ENCODE measurements at regions of chr2 and their contacts with region 1.

Region 1: DNA sequence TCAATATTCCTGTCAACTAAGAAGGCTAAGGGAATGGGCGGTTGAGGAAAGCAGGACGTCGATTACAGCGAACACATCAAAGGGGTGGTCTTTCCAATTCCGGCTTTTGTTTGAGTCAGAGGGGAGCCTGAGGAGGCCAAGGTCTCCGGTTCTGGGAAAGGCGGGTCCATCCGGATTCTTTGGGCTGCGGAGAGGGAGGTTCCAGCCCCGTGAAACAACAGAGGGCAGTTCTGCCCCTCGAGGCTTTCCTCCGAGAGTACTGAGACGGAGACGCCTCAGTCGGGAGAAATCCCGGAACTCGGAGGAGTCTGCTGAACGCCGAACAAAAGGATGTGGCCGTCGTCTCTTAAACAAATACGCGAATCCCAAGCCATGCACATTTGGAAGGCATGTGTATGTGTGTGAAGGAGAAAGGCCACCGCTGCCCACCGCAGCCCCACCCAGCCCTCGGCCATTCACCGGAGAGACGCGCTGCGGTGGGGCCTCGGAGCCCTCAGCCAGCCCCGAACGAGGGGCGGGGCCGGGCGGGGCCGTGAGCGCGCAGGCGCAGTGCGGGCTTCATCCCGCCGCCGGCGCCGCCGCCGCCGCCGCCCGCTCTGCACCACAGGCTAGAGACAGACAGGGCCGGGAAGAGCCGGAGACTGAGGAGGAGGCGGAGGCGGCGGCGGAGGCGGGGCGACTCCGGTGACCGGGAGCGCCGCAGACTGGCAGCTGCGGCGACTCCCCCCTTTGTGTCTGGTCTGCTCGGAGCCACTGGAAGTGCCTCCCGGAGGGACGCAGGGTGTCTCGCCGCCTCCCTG is at the start of gene BMPR2:
- DNase-seq: peak; percentile 90 to 91
- ATAC-seq: peak; percentile 85 to 94 (median 90)
- H3K4me3 ChIP-seq: peak within 1 kb of the TSS; percentile 74 to 98 (median 93)
- H3K27ac ChIP-seq: peak within 1 kb of the TSS; percentile 92 to 100 (median 98)
- H3K4me1 ChIP-seq: peaks cover 2 to 39% (median 23%) of the 10 kb centered on the region in 9 donors
- H3K27me3 ChIP-seq: peaks cover 0 to 5% (median 0%) of the 10 kb centered on the region in 7 donors
- CTCF ChIP-seq: no peak
- total RNA-seq, gene BMPR2: 48.5 to 89.4 (median 75.3) TPM

Region 2: DNA sequence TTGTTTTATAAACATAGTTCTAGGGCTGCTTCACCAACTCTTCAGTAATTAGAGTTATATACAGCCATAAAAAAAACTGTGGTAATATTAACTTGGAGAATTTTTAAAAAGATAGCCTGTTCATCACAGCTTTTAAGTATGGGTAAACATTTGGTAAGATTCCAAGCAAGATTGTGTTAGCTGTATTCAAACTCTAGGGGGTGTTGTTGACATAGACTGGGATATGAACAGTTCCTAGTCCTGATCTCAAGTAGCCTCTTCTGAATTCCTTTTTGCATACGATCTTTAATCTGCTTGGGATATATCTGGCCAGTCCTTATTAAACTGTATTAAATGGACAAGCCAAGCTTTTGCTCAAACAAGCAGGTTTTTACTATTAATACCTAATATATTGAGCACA is 96.9 kb before region 1 on chr2:
- intact Hi-C with region 1: loop called in 4 of 10 experiments (anchors 2 to 10 kb)
- DNase-seq: no peak
- ATAC-seq: peak in 7 of 8 donors; percentile 57 to 84 (median 74)
- H3K4me3 ChIP-seq: no peak overlapping the region
- H3K27ac ChIP-seq: peak overlapping the region in 2 of 10 donors; percentile 1 to 59
- H3K4me1 ChIP-seq: peaks cover 0 to 32% (median 21%) of the 10 kb centered on the region in 9 donors
- H3K27me3 ChIP-seq: no peaks in the 10 kb centered on the region
- CTCF ChIP-seq: peak; percentile 28 to 80 (median 65)

Region 3: DNA sequence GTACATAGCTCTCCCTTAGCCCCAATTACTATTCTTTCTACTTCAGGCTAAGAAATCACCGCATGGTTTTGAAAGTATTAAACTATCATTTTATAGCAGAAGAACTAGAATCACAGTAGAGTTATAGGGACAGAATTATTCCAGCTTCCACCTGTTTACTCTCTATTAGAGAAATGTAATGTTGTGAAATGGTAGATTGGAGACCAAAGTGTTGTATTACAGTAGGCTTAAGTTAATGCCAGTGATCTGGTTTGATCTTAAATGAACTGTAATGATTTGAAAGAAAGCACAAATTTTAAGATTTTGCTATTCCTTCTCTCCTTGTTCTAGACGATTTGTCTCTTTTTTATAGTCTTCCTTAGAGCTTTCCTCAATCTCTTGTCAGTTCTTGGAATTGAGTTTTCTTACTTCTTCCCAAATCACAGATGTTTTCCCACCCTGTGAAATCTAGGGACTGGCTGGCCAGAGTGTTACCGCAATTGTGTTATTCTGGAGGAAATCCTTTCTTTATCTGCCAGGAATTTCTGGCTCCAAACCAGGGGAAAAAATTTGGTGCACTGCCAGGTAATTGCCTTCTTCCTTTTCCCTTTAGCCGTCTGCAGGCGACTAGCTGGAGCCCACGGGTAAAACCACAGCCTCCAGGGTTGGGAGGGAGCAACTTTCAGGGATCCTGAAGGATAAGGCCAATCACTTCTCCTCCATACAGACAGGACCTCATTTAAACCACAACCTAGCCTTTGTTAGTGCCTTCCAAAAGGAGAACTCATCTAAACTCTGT is 58.5 kb before region 1 on chr2:
- intact Hi-C with region 1: loop called in 7 of 10 experiments (anchors 1 to 10 kb)
- DNase-seq: peak; percentile 31 to 87
- ATAC-seq: peak; percentile 83 to 94 (median 90)
- H3K4me3 ChIP-seq: no peak overlapping the region
- H3K27ac ChIP-seq: peak overlapping the region in 8 of 10 donors; percentile 25 to 89 (median 40)
- H3K4me1 ChIP-seq: peaks cover 0 to 36% (median 19%) of the 10 kb centered on the region in 9 donors
- H3K27me3 ChIP-seq: no peaks in the 10 kb centered on the region
- CTCF ChIP-seq: no peak

Region 4: GRCh38 chr2:202339071-202339870 is 36.5 kb before region 1 on chr2:
- intact Hi-C with region 1: loop called in 1 of 10 experiments (anchors 5 kb)
- DNase-seq: no peak
- ATAC-seq: no peak
- H3K4me3 ChIP-seq: no peak overlapping the region
- H3K27ac ChIP-seq: no peak overlapping the region
- H3K4me1 ChIP-seq: peaks cover 0 to 20% (median 4%) of the 10 kb centered on the region in 9 donors
- H3K27me3 ChIP-seq: no peaks in the 10 kb centered on the region
- CTCF ChIP-seq: no peak

Region 5: GRCh38 chr2:202494300-202495229 is 118.8 kb after region 1 on chr2:
- intact Hi-C with region 1: loop called in 4 of 10 experiments (anchors 5 to 10 kb)
- DNase-seq: peak in 1 of 2 donors; percentile 31
- ATAC-seq: peak; percentile 52 to 83 (median 68)
- H3K4me3 ChIP-seq: no peak overlapping the region
- H3K27ac ChIP-seq: peak overlapping the region in 1 of 10 donors; percentile 11
- H3K4me1 ChIP-seq: peaks cover 0 to 56% (median 27%) of the 10 kb centered on the region in 9 donors
- H3K27me3 ChIP-seq: no peaks in the 10 kb centered on the region
- CTCF ChIP-seq: no peak

Region 6: DNA sequence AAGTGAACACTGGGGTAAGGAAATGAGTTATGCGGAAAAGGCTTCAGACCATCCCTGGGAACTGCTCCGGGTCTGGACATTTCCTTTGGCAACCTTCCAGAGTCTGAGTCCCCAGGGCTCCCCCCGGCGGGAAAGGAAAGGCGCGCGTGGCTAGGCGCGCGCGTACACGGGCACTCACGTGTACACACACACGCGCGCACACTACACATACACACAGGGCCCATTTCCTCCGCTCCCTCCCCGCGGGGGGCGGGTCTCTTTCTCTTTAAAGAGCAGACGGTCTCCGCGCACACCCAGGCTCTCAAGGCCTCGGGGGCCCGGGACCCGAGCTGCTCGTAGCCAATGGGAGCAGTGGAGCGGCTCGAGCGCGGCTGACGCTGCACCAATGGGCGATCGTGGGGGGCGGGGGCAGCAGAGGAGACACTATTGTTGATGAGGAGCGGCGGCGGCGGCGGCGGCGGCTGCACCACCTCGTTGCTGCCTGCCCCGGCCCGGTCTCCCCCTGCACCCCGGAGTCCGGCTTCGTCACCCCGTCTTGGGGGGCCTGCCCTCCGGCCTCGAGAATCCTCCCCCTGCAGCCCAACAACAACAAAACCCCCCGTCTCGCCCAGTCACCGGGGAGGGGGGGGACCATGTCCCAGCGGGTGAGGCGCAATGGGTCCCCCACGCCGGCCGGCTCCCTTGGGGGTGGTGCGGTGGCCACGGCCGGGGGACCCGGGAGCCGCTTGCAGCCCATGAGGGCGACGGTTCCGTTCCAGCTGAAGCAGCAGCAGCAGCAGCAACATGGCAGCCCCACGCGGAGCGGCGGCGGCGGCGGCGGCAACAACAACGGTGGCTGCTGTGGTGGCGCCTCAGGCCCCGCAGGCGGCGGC is 259.0 kb after region 1 on chr2 and contains the start of gene FAM117B:
- intact Hi-C with region 1: loop called in 1 of 10 experiments (anchors 10 kb)
- DNase-seq: peak; percentile 98
- ATAC-seq: peak; percentile 97 to 99 (median 98)
- H3K4me3 ChIP-seq: peak within 1 kb of the TSS; percentile 85 to 99 (median 96)
- H3K27ac ChIP-seq: peak within 1 kb of the TSS; percentile 81 to 95 (median 90)
- H3K4me1 ChIP-seq: peaks cover 3 to 30% (median 24%) of the 10 kb centered on the region in 9 donors
- H3K27me3 ChIP-seq: no peaks in the 10 kb centered on the region
- CTCF ChIP-seq: peak in 1 of 9 donors; percentile 5
- total RNA-seq, gene FAM117B: 0.75 to 3.9 (median 2.6) TPM

Region 7: GRCh38 chr2:203056288-203056687 is 680.5 kb after region 1 on chr2:
- intact Hi-C with region 1: no loop called
- DNase-seq: no peak
- ATAC-seq: no peak
- H3K4me3 ChIP-seq: no peak overlapping the region
- H3K27ac ChIP-seq: no peak overlapping the region
- H3K4me1 ChIP-seq: no peaks in the 10 kb centered on the region
- H3K27me3 ChIP-seq: no peaks in the 10 kb centered on the region
- CTCF ChIP-seq: no peak